ENCODE measurements at regions of chrX and their contacts with region 1.

Region 1: GRCh38 chrX:46545111-46546005 is at the start of gene ZNF674:
- DNase-seq: peak; percentile 85 to 88
- ATAC-seq: peak; percentile 97 to 99
- H3K4me3 ChIP-seq: peak within 1 kb of the TSS; percentile 64 to 79 (median 78)
- H3K27ac ChIP-seq: peak within 1 kb of the TSS; percentile 85 to 89 (median 87)
- H3K4me1 ChIP-seq: peaks cover 9% of the 10 kb centered on the region in 2 donors
- H3K27me3 ChIP-seq: no peaks in the 10 kb centered on the region
- CTCF ChIP-seq: peak in 2 of 5 experiments; percentile 33 to 45
- POLR2A ChIP-seq: peak; percentile 70 to 74
- total RNA-seq, gene ZNF674: 1.4 to 2.6 (median 2.1) TPM

Region 2: GRCh38 chrX:46446727-46447378 is 98.5 kb before region 1 on chrX:
- in situ Hi-C with region 1: loop called in 1 of 4 experiments (anchors 25 kb)
- intact Hi-C with region 1: loop called (anchors 2 kb)
- DNase-seq: peak; percentile 59 to 81
- ATAC-seq: peak; percentile 88 to 92
- H3K4me3 ChIP-seq: peak overlapping the region; percentile 70 to 90 (median 82)
- H3K27ac ChIP-seq: peak overlapping the region; percentile 84 to 90 (median 88)
- H3K4me1 ChIP-seq: no peaks in the 10 kb centered on the region
- H3K27me3 ChIP-seq: no peaks in the 10 kb centered on the region
- CTCF ChIP-seq: no peak
- POLR2A ChIP-seq: peak; percentile 35 to 62

Region 3: DNA sequence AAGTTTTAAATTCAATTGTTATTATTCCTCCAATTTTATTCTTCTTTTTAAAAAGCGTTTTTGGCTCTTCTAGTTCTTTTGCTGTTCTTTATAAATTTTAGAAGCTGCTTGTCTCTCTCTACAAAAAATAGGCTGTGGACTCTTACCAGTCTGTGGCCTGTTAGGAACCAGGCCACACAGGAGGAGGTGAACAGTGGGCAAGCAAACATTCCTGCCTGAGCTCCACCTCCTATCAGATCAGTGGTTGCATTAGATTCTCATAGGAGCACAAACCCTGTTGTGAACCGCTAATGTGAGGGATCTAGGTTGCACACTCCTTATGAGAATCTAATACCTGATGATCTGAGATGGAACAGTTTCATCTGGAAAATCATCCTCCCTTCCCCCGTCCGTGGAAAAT is 389.9 kb after region 1 on chrX:
- in situ Hi-C with region 1: no loop called
- intact Hi-C with region 1: no loop called
- DNase-seq: no peak
- ATAC-seq: no peak
- H3K4me3 ChIP-seq: no peak overlapping the region
- H3K27ac ChIP-seq: no peak overlapping the region
- H3K4me1 ChIP-seq: no peaks in the 10 kb centered on the region
- H3K27me3 ChIP-seq: no peaks in the 10 kb centered on the region
- CTCF ChIP-seq: no peak
- POLR2A ChIP-seq: no peak

Region 4: GRCh38 chrX:47129157-47129898 is 584.0 kb after region 1 on chrX:
- in situ Hi-C with region 1: no loop called
- intact Hi-C with region 1: loop called (anchors 10 kb)
- DNase-seq: peak; percentile 84 to 95
- ATAC-seq: peak; percentile 100
- H3K4me3 ChIP-seq: peak overlapping the region; percentile 62 to 70 (median 70)
- H3K27ac ChIP-seq: peak overlapping the region; percentile 83 to 88 (median 87)
- H3K4me1 ChIP-seq: peaks cover 0 to 4% of the 10 kb centered on the region in 2 donors
- H3K27me3 ChIP-seq: no peaks in the 10 kb centered on the region
- CTCF ChIP-seq: no peak
- POLR2A ChIP-seq: peak in 1 of 2 donors; percentile 29